ENCODE measurements at regions of chr22 and their contacts with region 1.

Region 1: GRCh38 chr22:48574776-48575565 is 1252.7 kb downstream of the BRD1 start:
- DNase-seq: peak in 3 of 5 donors; percentile 23 to 49 (median 27)
- ATAC-seq: peak in 3 of 4 donors; percentile 69 to 83 (median 77)
- H3K4me3 ChIP-seq: peak overlapping the region in 1 of 12 donors; percentile 44
- H3K27ac ChIP-seq: no peak overlapping the region
- H3K4me1 ChIP-seq: peaks cover 0 to 13% (median 0%) of the 10 kb centered on the region in 12 donors
- H3K27me3 ChIP-seq: peaks cover 17 to 47% (median 29%) of the 10 kb centered on the region in 9 donors
- CTCF ChIP-seq: peak in 9 of 12 donors; percentile 13 to 43 (median 26)
- POLR2A ChIP-seq: no peak

Region 2: GRCh38 chr22:49632199-49633009 is 1057.4 kb after region 1 on chr22:
- intact Hi-C with region 1: loop called in 6 of 10 experiments (anchors 2 to 10 kb)
- DNase-seq: peak; percentile 48 to 81 (median 56)
- ATAC-seq: peak; percentile 69 to 86 (median 78)
- H3K4me3 ChIP-seq: peak overlapping the region in 11 of 12 donors; percentile 12 to 53 (median 44)
- H3K27ac ChIP-seq: peak overlapping the region in 4 of 12 donors; percentile 12 to 33 (median 26)
- H3K4me1 ChIP-seq: peaks cover 0 to 14% (median 11%) of the 10 kb centered on the region in 12 donors
- H3K27me3 ChIP-seq: no peaks in the 10 kb centered on the region
- CTCF ChIP-seq: peak; percentile 62 to 94 (median 82)
- POLR2A ChIP-seq: no peak

Region 3: DNA sequence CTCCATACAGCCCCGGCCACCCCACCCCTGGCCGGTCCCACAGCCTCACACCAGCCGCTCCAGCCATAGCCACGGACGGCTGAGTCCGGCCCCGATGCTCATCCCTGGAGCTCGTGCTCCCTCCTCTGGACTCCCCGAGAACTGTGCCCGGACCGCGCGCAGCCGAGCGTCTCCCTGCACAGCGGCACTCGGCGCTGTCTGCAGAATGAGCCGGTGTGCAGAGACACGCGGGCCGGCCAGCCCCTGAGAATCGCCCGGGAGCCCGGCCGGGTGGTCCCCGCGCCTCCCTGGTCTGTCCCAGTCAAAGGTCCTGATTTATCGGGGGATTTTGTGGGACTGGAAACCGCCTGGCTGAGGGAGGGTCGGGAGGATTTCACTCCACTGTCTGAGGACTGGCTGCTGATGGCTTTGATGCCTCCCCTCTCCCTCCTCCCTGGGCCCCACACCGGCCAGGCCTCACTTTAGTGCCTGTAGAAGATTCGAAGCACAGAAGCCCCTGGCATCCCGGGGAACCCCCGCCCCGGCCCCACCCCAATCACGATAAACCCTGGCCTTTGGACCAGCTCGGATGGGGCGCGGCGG is 1150.0 kb after region 1 on chr22:
- intact Hi-C with region 1: loop called in 2 of 10 experiments (anchors 10 kb)
- DNase-seq: peak; percentile 56 to 78 (median 63)
- ATAC-seq: peak; percentile 55 to 96 (median 93)
- H3K4me3 ChIP-seq: peak overlapping the region; percentile 2 to 56 (median 44)
- H3K27ac ChIP-seq: no peak overlapping the region
- H3K4me1 ChIP-seq: peaks cover 0 to 14% (median 4%) of the 10 kb centered on the region in 12 donors
- H3K27me3 ChIP-seq: peaks cover 6 to 67% (median 30%) of the 10 kb centered on the region in 9 donors
- CTCF ChIP-seq: peak; percentile 59 to 83 (median 72)
- POLR2A ChIP-seq: no peak

Region 4: DNA sequence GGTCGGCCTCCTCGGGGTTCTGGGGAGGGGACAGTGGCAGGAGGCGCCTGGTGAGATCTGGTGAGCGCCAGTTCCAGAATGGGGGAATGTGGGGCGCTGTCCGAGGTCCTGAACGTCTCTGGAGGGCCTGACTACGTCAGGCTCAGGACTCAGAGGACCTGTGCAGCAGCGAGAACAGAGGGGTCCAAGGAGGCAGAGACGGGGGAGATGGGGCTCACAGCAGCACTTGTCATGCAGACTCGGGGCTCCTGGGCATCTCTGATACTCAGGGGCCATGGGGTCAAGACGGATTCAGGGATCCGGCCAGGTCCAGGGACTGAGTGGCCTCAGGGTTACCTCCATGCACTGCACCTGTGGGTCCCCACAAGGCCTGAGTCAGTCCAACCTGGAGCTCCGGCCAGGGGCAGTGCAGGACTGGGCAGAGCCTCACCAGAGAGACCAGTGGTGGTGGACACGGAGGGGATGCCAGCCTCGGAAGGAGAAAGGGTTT is 1160.5 kb after region 1 on chr22:
- intact Hi-C with region 1: loop called in 1 of 10 experiments (anchors 10 kb)
- DNase-seq: peak in 1 of 5 donors; percentile 29
- ATAC-seq: peak in 1 of 4 donors; percentile 38
- H3K4me3 ChIP-seq: no peak overlapping the region
- H3K27ac ChIP-seq: no peak overlapping the region
- H3K4me1 ChIP-seq: no peaks in the 10 kb centered on the region
- H3K27me3 ChIP-seq: peaks cover 0 to 50% (median 13%) of the 10 kb centered on the region in 9 donors
- CTCF ChIP-seq: no peak
- POLR2A ChIP-seq: no peak

Measured in heart left ventricle (tissue), 16 donors.